Colonic mucosa (tissue), 4 donors: ENCODE measurements at regions of chr15 and their contacts with region 1.

Region 1: GRCh38 chr15:56491110-56491722 is 26.3 kb upstream of the MNS1 start:
- DNase-seq: peak; percentile 75
- H3K4me3 ChIP-seq: no peak overlapping the region
- H3K27ac ChIP-seq: no peak overlapping the region
- H3K4me1 ChIP-seq: no peaks in the 10 kb centered on the region
- H3K27me3 ChIP-seq: no peaks in the 10 kb centered on the region
- CTCF ChIP-seq: peak; percentile 85

Region 2: DNA sequence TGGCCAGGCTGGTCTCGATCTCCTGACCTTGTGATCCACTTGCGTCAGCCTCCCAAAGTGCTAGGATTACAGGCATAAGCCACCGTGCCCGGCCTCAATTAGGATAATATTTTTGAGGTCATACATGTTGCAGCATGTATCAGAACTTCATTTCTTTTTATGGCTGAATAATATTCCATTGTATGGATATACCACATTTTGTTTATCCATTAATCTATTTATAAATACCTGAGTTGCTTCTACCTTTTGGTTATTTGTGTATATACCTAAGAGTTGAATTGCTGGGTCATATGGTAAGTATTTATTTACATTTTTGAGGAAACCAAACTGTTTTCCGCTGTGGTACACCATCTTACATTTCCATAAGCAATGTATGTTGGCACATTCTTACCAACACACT is 885.0 kb before region 1 on chr15:
- intact Hi-C with region 1: no loop called
- DNase-seq: no peak
- H3K4me3 ChIP-seq: no peak overlapping the region
- H3K27ac ChIP-seq: no peak overlapping the region
- H3K4me1 ChIP-seq: no peaks in the 10 kb centered on the region
- H3K27me3 ChIP-seq: no peaks in the 10 kb centered on the region
- CTCF ChIP-seq: no peak

Region 3: GRCh38 chr15:56869573-56869972 is 378.4 kb after region 1 on chr15:
- intact Hi-C with region 1: loop called (anchors 10 kb)
- DNase-seq: peak; percentile 70
- H3K4me3 ChIP-seq: no peak overlapping the region
- H3K27ac ChIP-seq: no peak overlapping the region
- H3K4me1 ChIP-seq: no peaks in the 10 kb centered on the region
- H3K27me3 ChIP-seq: no peaks in the 10 kb centered on the region
- CTCF ChIP-seq: peak; percentile 52

Region 4: GRCh38 chr15:57138349-57138788 is 647.2 kb after region 1 on chr15:
- intact Hi-C with region 1: loop called (anchors 10 kb)
- DNase-seq: no peak
- H3K4me3 ChIP-seq: no peak overlapping the region
- H3K27ac ChIP-seq: no peak overlapping the region
- H3K4me1 ChIP-seq: no peaks in the 10 kb centered on the region
- H3K27me3 ChIP-seq: no peaks in the 10 kb centered on the region
- CTCF ChIP-seq: peak; percentile 75

Region 5: GRCh38 chr15:57213862-57214261 is 722.6 kb after region 1 on chr15:
- intact Hi-C with region 1: loop called (anchors 10 kb)
- DNase-seq: no peak
- H3K4me3 ChIP-seq: no peak overlapping the region
- H3K27ac ChIP-seq: no peak overlapping the region
- H3K4me1 ChIP-seq: no peaks in the 10 kb centered on the region
- H3K27me3 ChIP-seq: no peaks in the 10 kb centered on the region
- CTCF ChIP-seq: peak; percentile 39